ENCODE measurements at regions of chr12 and their contacts with region 1.

Region 1: GRCh38 chr12:9039397-9039977 is 50.1 kb downstream of the KLRG1 start:
- DNase-seq: peak; percentile 57
- H3K4me3 Mint-ChIP-seq: no peak overlapping the region
- H3K27ac Mint-ChIP-seq: no peak overlapping the region
- H3K4me1 Mint-ChIP-seq: no peaks in the 10 kb centered on the region
- H3K27me3 Mint-ChIP-seq: no peaks in the 10 kb centered on the region
- CTCF ChIP-seq: peak; percentile 78

Region 2: GRCh38 chr12:8681041-8681902 is 358.2 kb before region 1 on chr12:
- CTCF ChIA-PET with region 1: interaction called, 15 read pairs
- POLR2A ChIA-PET with region 1: no interaction called
- intact Hi-C with region 1: loop called (anchors 1 kb)
- DNase-seq: peak; percentile 79
- H3K4me3 Mint-ChIP-seq: peak overlapping the region; percentile 67
- H3K27ac Mint-ChIP-seq: peak overlapping the region; percentile 63
- H3K4me1 Mint-ChIP-seq: peaks cover 19% of the 10 kb centered on the region
- H3K27me3 Mint-ChIP-seq: no peaks in the 10 kb centered on the region
- CTCF ChIP-seq: no peak

Region 3: GRCh38 chr12:8780389-8780788 is 259.1 kb before region 1 on chr12:
- CTCF ChIA-PET with region 1: interaction called, 4 read pairs
- POLR2A ChIA-PET with region 1: no interaction called
- intact Hi-C with region 1: loop called (anchors 1 kb)
- DNase-seq: peak; percentile 26
- H3K4me3 Mint-ChIP-seq: no peak overlapping the region
- H3K27ac Mint-ChIP-seq: no peak overlapping the region
- H3K4me1 Mint-ChIP-seq: no peaks in the 10 kb centered on the region
- H3K27me3 Mint-ChIP-seq: no peaks in the 10 kb centered on the region
- CTCF ChIP-seq: peak; percentile 19

Region 4: DNA sequence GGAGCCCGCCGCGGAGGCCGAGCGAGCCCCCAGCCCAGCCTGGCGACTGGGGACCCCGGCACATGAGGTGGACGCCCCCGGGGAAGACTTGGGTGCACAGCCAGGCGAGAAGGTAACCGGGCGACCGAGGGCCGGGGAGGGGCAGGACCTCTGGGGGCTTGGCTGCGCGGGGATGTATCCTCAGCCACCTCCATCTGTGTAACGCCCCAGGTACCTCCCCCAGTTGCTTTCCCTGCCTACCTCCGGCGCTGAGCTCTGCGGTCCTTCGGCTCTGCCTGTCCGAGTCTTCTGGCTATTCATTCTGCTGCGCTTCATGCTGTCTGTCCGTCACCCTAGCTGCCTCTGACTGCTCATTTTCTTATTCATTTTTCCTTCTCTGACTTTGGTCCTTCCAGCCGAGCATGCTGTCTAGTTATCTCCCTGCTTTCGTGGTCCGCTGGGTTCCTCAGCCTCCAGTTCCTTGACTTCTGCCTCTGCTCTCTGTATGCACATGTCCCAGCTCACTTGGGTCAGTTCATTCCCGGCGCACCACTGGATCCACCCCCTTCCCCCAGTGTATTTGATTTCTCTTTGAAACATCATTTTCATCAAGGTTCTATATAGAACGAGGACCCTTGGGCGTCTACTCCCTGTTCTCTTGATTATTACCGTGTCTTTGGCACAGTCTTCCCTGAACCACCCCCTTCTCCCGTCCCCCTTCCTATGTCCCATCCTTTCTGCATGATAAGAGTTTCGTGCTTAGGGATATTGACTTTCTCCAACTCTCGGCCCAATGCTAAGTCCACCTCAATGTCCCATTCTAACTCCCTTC is 124.6 kb before region 1 on chr12:
- CTCF ChIA-PET with region 1: interaction called, 7 read pairs
- POLR2A ChIA-PET with region 1: no interaction called
- intact Hi-C with region 1: loop called (anchors 2 kb)
- DNase-seq: peak; percentile 61
- H3K4me3 Mint-ChIP-seq: no peak overlapping the region
- H3K27ac Mint-ChIP-seq: no peak overlapping the region
- H3K4me1 Mint-ChIP-seq: peaks cover 16% of the 10 kb centered on the region
- H3K27me3 Mint-ChIP-seq: no peaks in the 10 kb centered on the region
- CTCF ChIP-seq: no peak

Region 5: DNA sequence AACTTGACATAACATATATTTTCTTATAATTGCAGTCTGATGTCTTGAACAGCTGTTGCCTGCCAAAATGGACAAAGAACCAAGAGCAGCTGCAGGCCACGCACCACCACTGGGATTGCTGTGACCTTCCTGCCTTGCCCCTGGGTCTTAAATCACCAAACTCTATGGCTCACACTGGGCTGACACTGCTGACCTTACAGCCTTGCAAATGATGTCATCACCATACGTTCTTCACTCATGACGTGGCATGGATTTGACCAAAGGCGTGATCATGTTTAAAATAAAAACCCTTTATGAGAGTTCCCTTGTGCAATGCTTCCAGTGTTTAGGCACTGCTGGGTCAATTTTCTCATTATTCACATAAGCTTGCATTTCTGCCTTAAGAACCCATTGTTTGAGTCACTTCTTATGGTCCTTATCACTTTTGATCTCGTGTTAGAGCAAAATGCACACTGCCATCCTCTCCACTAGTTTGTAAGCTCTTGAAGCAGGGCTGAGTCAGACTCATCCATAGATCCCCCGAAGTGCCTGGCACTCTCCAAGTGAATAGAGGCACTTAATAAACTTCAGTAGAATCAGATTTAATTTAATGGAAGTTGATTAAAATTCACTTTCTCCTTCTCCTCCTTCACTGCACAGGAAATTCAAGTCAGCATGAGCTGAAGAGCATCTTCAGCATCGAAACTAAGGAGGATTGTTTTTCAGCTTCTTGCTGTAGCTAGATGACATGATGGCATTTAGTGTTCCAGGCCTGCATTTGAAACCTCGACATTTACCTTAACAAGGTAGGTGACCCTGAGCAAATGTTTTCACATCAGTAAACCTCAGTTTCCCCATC is 301.2 kb after region 1 on chr12:
- CTCF ChIA-PET with region 1: no interaction called
- POLR2A ChIA-PET with region 1: no interaction called
- intact Hi-C with region 1: no loop called
- DNase-seq: peak; percentile 12
- H3K4me3 Mint-ChIP-seq: no peak overlapping the region
- H3K27ac Mint-ChIP-seq: no peak overlapping the region
- H3K4me1 Mint-ChIP-seq: no peaks in the 10 kb centered on the region
- H3K27me3 Mint-ChIP-seq: no peaks in the 10 kb centered on the region
- CTCF ChIP-seq: no peak

Measured in MCF 10A (cell line).